GM12878 (cell line): ENCODE measurements at regions of chr1 and their contacts with region 1.

Region 1: DNA sequence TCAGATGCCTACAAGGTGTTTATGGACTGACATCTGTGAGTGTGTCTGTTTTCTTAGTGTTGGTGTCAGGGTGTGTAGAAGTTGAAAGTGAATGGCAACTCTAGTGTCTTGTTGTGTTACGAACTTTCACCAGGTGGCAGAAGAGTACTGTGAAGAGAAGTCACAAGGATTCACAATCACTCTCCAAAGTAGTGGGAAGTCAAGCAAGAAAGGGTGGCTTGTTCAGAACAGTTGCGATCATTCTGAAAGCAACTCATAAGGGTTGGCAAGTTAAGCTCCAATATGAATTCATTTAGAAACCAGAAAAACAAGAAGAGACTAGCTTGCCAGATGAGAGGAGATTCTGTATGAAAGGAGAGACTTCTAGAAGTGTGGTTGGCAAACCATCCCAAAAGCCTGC is 86.1 kb downstream of the FASLG start:
- DNase-seq: peak; percentile 79
- ATAC-seq: peak; percentile 86
- H3K4me3 ChIP-seq: no peak overlapping the region
- H3K27ac ChIP-seq: no peak overlapping the region
- H3K4me1 ChIP-seq: peaks cover 20% of the 10 kb centered on the region
- H3K27me3 ChIP-seq: 0 out of 4 replicates have a peak, but pooled peaks cover 0 to 5% of the 10 kb centered on the region in 2 experiments
- CTCF ChIP-seq: peak; percentile 70 to 86 (median 78)
- EP300 ChIP-seq: no peak
- POLR2A ChIP-seq: no peak
- RAD21 ChIP-seq: peak; percentile 97

Region 2: DNA sequence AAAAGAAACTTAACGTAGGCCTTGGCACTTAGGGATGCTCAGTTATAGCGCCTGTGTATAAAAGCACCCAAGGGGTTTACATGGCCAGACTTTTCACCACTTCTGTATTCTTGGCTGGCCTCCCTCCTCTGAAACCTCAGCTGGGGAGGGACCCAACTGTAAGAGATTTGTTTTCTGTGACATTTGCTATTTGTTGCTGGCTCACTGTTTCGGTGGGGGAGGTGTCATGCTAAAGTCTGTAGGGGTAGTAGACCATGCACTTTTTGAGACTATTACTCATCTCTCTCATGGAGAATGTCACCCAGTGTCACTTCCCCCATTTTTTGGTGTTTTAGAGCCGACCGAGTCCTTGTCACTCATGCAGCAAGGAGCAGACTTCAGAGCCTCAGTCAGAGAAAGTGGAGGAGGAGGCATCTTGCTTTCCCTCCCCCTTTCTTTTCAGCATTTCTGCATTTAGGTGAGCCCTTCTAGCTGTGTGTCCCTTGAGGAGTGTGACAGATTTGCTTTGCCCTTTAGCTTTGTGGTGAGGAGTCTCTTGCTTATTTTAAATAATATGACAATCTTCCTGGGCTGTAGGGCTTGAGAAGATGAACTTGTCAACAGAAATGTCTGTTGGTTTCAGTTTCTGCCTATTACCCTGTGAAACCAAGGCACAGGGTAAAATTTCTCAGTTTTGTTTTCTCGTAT is 74.0 kb after region 1 on chr1:
- CTCF ChIA-PET with region 1: interaction called, 117 read pairs
- POLR2A ChIA-PET with region 1: no interaction called
- RAD21 ChIA-PET with region 1: interaction called, 36 read pairs
- SMC1A ChIA-PET with region 1: interaction called, 66 read pairs
- in situ Hi-C with region 1: loop called (anchors 5 kb)
- intact Hi-C with region 1: loop called (anchors 1 kb)
- DNase-seq: peak; percentile 99
- ATAC-seq: peak; percentile 95
- H3K4me3 ChIP-seq: no peak overlapping the region; the same call in 1 of the 2 replicates
- H3K27ac ChIP-seq: peak overlapping the region; percentile 73
- H3K4me1 ChIP-seq: peaks cover 32% of the 10 kb centered on the region
- H3K27me3 ChIP-seq: no peaks in the 10 kb centered on the region
- CTCF ChIP-seq: no peak
- EP300 ChIP-seq: peak; percentile 91 to 92
- POLR2A ChIP-seq: no peak
- RAD21 ChIP-seq: peak; percentile 23; the same call in 1 of the 2 replicates

Region 3: DNA sequence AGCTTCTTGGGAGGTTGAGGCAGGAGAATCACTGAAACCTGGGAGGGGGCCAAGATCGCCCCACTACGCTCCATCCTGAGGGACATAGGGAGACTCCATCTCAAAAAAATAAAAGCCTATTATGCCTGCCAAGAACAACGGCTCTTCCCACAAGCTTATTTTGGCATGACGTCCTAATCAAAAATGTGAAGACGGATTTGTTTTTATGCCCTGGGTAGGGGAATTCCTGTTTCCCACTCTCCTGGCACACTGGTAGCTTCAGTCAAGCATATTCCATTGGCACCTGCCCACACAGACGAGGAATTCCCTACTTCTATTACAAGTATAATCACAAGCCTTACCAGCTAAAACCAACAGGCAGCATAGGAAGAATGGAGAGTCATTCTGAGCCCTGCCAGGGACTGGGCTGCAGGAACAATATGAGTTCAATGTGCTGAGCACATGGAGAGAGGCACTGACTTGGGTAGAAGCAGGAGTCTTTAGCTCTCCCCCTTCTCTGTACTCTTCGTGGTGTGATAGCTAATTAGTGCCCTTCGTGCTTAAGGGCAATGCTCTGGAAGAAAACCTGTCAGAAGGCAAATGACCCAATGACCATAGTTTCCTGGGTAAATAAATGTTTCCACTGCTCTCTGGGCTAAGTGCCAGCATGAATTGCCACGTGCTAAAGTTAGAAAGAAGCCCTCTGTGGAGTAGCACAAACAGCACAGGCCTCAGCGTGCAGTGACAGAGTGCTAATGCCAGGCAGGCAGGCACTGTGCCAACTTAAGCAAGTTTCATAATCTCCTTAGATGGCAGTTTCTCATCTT is 445.3 kb after region 1 on chr1:
- CTCF ChIA-PET with region 1: interaction called, 16 read pairs
- POLR2A ChIA-PET with region 1: no interaction called
- RAD21 ChIA-PET with region 1: interaction called, 4 read pairs
- SMC1A ChIA-PET with region 1: interaction called, 27 read pairs
- in situ Hi-C with region 1: no loop called
- intact Hi-C with region 1: no loop called
- DNase-seq: peak; percentile 63
- ATAC-seq: peak; percentile 59
- H3K4me3 ChIP-seq: no peak overlapping the region
- H3K27ac ChIP-seq: no peak overlapping the region
- H3K4me1 ChIP-seq: no peaks in the 10 kb centered on the region
- H3K27me3 ChIP-seq: no peaks in the 10 kb centered on the region
- CTCF ChIP-seq: no peak
- EP300 ChIP-seq: no peak
- POLR2A ChIP-seq: no peak
- RAD21 ChIP-seq: no peak

Region 4: DNA sequence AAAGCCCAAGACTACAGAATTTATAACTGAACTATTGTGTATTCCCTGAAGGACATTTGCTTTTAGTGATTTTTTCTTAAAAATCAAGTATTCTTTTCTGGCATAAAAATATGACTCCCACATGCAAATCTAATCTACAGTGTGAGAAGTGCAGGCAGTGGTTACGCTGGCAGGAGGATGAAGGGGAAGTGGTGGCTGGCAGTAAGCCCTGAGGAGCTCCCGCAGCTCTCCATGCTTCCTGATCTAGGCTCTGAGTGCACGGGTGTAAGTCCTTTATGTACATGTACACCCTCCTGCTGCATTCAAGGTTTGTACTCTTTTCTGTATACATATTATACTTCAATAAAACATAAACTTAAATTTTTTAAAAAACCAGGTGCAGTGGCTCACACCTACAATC is 664.6 kb after region 1 on chr1:
- CTCF ChIA-PET with region 1: interaction called, 8 read pairs
- POLR2A ChIA-PET with region 1: no interaction called
- RAD21 ChIA-PET with region 1: no interaction called
- SMC1A ChIA-PET with region 1: interaction called, 6 read pairs
- in situ Hi-C with region 1: loop called (anchors 5 kb)
- intact Hi-C with region 1: loop called (anchors 2 kb)
- DNase-seq: no peak
- ATAC-seq: peak; percentile 17
- H3K4me3 ChIP-seq: peak overlapping the region; percentile 35; the same call in 1 of the 2 replicates
- H3K27ac ChIP-seq: peak overlapping the region; percentile 98
- H3K4me1 ChIP-seq: peaks cover 65% of the 10 kb centered on the region
- H3K27me3 ChIP-seq: no peaks in the 10 kb centered on the region
- CTCF ChIP-seq: no peak
- EP300 ChIP-seq: peak in 1 of 2 experiments; percentile 29; a peak in 1 of 4 replicates
- POLR2A ChIP-seq: no peak
- RAD21 ChIP-seq: no peak

Region 5: GRCh38 chr1:173824331-173825081 is 1079.5 kb after region 1 on chr1 and contains the starts of genes CENPL and DARS2:
- CTCF ChIA-PET with region 1: interaction called, 4 read pairs
- POLR2A ChIA-PET with region 1: interaction called, 3 read pairs
- RAD21 ChIA-PET with region 1: interaction called, 9 read pairs
- SMC1A ChIA-PET with region 1: interaction called, 5 read pairs
- in situ Hi-C with region 1: loop called (anchors 10 kb)
- intact Hi-C with region 1: loop called (anchors 2 kb)
- DNase-seq: peak; percentile 94
- ATAC-seq: peak; percentile 87
- H3K4me3 ChIP-seq: peak within 1 kb of the TSS; percentile 92
- H3K27ac ChIP-seq: peak within 1 kb of the TSS; percentile 91
- H3K4me1 ChIP-seq: no peaks in the 10 kb centered on the region; the same call in 1 of the 2 replicates
- H3K27me3 ChIP-seq: no peaks in the 10 kb centered on the region
- CTCF ChIP-seq: no peak
- EP300 ChIP-seq: no peak; a peak in 1 of 4 replicates
- POLR2A ChIP-seq: peak; percentile 83
- RAD21 ChIP-seq: no peak
- polyA plus RNA-seq, gene CENPL: 14.9 to 26.7 TPM
- polyA plus RNA-seq, gene DARS2: 23.9 to 25.2 TPM

Region 6: GRCh38 chr1:174217787-174218574 is 1473.0 kb after region 1 on chr1:
- CTCF ChIA-PET with region 1: interaction called, 22 read pairs
- POLR2A ChIA-PET with region 1: no interaction called
- RAD21 ChIA-PET with region 1: interaction called, 5 read pairs
- SMC1A ChIA-PET with region 1: interaction called, 9 read pairs
- in situ Hi-C with region 1: no loop called
- intact Hi-C with region 1: loop called (anchors 2 kb)
- DNase-seq: no peak
- ATAC-seq: peak; percentile 79
- H3K4me3 ChIP-seq: no peak overlapping the region
- H3K27ac ChIP-seq: peak overlapping the region; percentile 36
- H3K4me1 ChIP-seq: peaks cover 38% of the 10 kb centered on the region
- H3K27me3 ChIP-seq: no peaks in the 10 kb centered on the region
- CTCF ChIP-seq: peak; percentile 64 to 79 (median 76); a peak in 5 of 6 replicates
- EP300 ChIP-seq: no peak
- POLR2A ChIP-seq: no peak
- RAD21 ChIP-seq: peak; percentile 86